K562 (cell line): ENCODE measurements at regions of chr11 and their contacts with region 1.

Region 1: DNA sequence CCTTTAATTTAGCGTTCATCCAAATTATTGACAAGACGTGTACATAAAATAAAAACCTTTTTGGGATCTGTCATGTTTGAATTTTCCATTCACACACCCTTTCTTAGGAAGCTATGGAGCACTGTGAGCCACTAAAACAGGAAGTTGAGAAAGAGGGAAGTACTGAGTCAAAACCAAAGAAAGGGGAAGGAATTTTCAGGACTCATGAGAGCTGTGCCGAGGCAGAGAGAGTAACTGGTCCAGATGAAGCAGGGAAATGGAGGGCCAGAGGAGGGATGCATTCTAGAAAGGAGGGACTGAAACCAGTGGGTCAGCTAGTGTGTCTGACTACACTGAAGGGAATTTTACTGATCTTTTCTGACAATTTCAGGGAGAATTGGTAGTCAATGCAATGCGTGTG is 24.9 kb downstream of the APLP2 start:
- DNase-seq: no peak
- ATAC-seq: peak; percentile 38
- H3K4me3 ChIP-seq: no peak overlapping the region
- H3K27ac ChIP-seq: peak overlapping the region; percentile 20; the same call in 1 of the 3 replicates
- H3K4me1 ChIP-seq: peaks cover 9 to 33% of the 10 kb centered on the region in 2 experiments; a peak in 4 of 5 replicates
- H3K27me3 ChIP-seq: no peaks in the 10 kb centered on the region
- CTCF ChIP-seq: no peak
- EP300 ChIP-seq: no peak
- POLR2A ChIP-seq: no peak
- RAD21 ChIP-seq: no peak

Region 2: DNA sequence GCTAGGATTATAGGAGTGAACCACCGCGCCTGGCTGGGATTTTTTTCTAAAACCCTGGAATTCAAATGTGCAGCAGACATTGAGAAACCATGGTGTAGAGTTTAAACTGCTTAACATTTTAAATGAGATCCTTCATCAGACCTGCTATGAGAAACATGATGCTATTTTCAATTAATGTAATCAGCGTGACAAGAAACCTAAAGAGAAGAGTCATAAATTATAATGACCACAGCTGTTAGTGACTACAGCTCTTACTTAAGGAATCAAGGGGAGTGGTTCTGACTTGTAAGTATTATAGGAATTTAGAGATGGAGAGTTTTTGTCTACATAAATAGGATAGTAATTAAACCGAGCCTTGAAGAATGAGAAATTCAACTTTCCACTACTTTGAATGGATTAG is 548.3 kb before region 1 on chr11:
- CTCF ChIA-PET with region 1: no interaction called
- POLR2A ChIA-PET with region 1: no interaction called
- in situ Hi-C with region 1: no loop called
- intact Hi-C with region 1: no loop called
- DNase-seq: no peak
- ATAC-seq: no peak
- H3K4me3 ChIP-seq: no peak overlapping the region
- H3K27ac ChIP-seq: no peak overlapping the region
- H3K4me1 ChIP-seq: no peaks in the 10 kb centered on the region
- H3K27me3 ChIP-seq: no peaks in the 10 kb centered on the region
- CTCF ChIP-seq: no peak
- EP300 ChIP-seq: no peak
- POLR2A ChIP-seq: no peak
- RAD21 ChIP-seq: no peak

Region 3: DNA sequence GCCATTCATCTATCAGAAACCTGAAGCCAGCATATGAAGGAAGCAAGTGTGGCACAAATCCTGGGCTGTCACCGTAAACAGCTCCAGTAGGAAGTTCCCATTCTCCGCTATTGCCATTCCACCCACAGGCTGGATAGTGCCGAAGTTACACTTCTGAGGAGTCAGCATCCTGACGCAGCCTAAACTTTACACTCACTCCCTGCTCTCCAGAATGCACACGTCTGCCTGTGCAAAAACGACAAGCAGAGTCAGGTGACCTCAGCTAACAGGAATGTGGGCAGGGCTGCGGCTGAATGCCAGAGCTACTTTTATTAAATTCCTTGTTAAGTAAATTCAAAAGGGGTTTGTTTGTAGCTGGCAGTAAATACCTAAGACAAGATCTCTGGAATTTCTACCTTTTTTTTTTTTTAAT is 232.9 kb before region 1 on chr11:
- CTCF ChIA-PET with region 1: no interaction called
- POLR2A ChIA-PET with region 1: no interaction called
- in situ Hi-C with region 1: no loop called
- intact Hi-C with region 1: no loop called
- DNase-seq: no peak
- ATAC-seq: no peak
- H3K4me3 ChIP-seq: no peak overlapping the region
- H3K27ac ChIP-seq: no peak overlapping the region
- H3K4me1 ChIP-seq: peaks cover 2 to 7% of the 10 kb centered on the region in 2 experiments; a peak in 4 of 5 replicates
- H3K27me3 ChIP-seq: no peaks in the 10 kb centered on the region
- CTCF ChIP-seq: no peak
- EP300 ChIP-seq: no peak
- POLR2A ChIP-seq: no peak
- RAD21 ChIP-seq: no peak

Region 4: DNA sequence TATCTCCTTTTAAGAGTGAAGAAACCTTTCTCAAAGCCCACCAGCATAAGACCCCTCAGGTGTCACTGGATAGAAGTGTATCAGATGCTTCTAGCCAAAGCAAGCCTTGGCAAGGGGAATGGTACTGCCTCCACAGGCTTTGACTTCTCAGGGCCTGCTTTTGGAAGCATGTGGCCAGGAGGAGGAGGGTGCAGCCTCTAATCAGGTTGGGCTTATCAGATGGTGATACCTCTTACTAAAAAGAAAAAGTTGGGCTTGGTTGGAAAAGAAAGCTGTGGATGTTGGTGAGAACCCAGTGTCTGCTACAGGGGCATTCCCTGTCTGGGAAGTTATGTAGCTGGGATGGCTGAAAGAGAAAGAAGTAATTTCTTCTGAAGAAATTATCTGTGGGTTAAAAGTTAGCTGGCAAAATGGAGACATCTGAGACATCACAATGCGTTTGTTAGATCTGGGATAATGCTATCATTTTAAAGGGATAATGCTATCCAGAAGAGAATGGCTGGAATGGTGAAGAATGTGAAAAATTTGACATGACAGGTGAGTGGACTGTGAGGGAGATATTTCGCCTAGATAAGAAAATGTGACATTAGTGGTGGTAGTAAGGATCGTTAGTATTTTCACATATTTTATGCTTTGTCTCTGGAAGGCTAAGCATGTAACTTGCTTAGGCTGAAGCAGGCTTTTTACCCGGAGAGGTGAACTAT is 17.7 kb before region 1 on chr11:
- CTCF ChIA-PET with region 1: no interaction called
- POLR2A ChIA-PET with region 1: interaction called, 4 read pairs
- in situ Hi-C with region 1: no loop called
- intact Hi-C with region 1: loop called (anchors 2 kb)
- DNase-seq: no peak
- ATAC-seq: peak; percentile 20
- H3K4me3 ChIP-seq: no peak overlapping the region
- H3K27ac ChIP-seq: peak overlapping the region; percentile 67
- H3K4me1 ChIP-seq: peaks cover 3 to 25% of the 10 kb centered on the region in 2 experiments; a peak in 4 of 5 replicates
- H3K27me3 ChIP-seq: no peaks in the 10 kb centered on the region
- CTCF ChIP-seq: no peak
- EP300 ChIP-seq: no peak
- POLR2A ChIP-seq: no peak
- RAD21 ChIP-seq: no peak

Region 5: DNA sequence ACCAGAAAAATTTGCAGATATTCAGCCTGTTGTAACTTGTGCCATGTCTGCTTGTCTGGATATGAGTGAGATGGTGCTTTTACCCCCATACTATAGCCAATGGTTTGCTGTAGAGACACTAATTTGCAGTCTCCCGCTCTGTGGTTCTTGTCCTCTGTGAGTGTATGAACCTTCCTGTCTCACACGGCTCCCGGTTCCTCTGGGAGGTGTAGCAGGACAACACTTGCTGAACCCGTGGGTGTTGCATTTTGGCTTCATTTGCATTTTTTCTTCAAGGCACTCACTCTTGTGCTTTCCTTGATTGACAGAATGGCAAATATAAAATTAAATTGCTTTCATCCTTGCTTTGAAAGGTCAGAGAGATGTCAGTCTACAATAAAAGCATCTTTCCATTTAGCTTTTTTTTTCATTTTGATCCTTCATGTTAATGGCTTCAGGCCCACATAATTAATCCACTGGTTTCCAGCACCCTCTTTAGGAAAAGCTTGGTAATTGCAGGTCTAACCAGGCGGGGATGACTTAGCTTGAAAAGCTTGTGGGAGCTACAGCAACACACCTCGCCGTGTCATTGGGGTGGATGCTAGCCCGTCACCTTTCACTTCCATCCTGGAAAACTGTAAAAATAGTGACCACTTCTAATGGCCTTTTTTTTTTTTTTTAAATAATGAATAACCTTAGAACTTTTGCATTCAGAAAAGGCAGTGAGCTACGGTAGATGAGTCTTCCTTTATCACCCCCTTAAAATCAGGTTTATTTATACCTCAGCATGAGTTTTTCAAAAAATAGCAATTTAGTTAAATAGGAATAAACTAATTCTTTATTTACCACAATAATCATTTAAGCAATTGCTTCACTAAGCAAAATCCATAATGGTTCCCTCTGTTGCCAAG is 37.6 kb after region 1 on chr11:
- CTCF ChIA-PET with region 1: no interaction called
- POLR2A ChIA-PET with region 1: no interaction called
- in situ Hi-C with region 1: no loop called
- intact Hi-C with region 1: no loop called
- DNase-seq: peak; percentile 52 to 78 (median 65)
- ATAC-seq: peak; percentile 96
- H3K4me3 ChIP-seq: no peak overlapping the region
- H3K27ac ChIP-seq: no peak overlapping the region
- H3K4me1 ChIP-seq: peaks cover 0 to 2% of the 10 kb centered on the region in 2 experiments; a peak in 1 of 5 replicates
- H3K27me3 ChIP-seq: no peaks in the 10 kb centered on the region
- CTCF ChIP-seq: peak; percentile 73 to 90 (median 87)
- EP300 ChIP-seq: no peak
- POLR2A ChIP-seq: no peak
- RAD21 ChIP-seq: peak; percentile 93

Region 6: DNA sequence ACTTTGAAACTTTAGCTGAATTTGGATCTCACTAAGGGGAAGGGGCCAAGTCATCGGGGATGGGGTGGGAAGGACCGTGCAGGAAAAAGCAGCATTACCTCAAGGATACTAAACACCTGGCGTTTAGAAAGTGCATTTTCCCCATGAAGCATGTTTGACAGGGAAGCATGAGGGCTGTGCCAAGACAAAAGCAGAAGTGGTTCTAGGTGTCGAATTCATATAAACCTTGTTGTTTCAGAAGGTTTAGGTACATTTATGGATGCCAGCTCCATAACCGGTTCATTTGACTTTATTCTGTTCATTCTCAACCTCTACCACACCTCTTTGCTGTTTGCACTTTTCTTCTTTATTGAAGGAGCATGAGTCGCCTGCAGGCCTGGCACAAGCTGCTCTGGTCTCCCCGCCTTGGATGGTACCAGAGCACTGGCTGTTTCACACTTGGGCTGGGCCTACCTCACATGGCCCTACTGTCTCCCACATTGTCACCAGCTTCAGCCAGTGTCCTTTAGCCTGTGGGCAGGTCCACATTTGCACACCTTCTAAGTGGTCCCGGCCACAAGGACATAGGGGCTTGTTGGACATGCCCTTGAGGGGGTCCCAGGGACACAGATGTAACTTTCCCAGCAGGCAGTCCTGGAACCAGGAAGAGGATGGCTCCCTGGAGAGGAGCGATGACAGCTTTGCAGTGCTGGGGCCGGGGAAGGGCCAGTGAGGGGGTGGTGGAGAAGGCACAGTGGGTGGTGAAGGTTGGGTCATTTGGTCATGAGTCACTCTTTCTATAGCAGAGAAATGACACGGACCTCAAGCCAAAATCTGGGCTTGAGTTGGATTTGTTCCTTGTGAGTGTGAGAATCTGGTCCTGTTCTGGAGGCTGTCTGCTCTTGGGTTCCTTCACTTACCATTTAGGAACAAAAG is 61.8 kb after region 1 on chr11:
- CTCF ChIA-PET with region 1: no interaction called
- POLR2A ChIA-PET with region 1: no interaction called
- in situ Hi-C with region 1: no loop called
- intact Hi-C with region 1: no loop called
- DNase-seq: peak in 2 of 4 experiments; percentile 26 to 30
- ATAC-seq: no peak; the same call in 1 of the 3 replicates
- H3K4me3 ChIP-seq: no peak overlapping the region
- H3K27ac ChIP-seq: no peak overlapping the region
- H3K4me1 ChIP-seq: peaks cover 0 to 12% of the 10 kb centered on the region in 2 experiments; a peak in 1 of 5 replicates
- H3K27me3 ChIP-seq: peaks cover 44 to 58% of the 10 kb centered on the region in 2 experiments
- CTCF ChIP-seq: no peak
- EP300 ChIP-seq: no peak
- POLR2A ChIP-seq: no peak
- RAD21 ChIP-seq: no peak